CD14-positive monocyte (primary cell): ENCODE measurements at regions of chr20 and their contacts with region 1.

Region 1: DNA sequence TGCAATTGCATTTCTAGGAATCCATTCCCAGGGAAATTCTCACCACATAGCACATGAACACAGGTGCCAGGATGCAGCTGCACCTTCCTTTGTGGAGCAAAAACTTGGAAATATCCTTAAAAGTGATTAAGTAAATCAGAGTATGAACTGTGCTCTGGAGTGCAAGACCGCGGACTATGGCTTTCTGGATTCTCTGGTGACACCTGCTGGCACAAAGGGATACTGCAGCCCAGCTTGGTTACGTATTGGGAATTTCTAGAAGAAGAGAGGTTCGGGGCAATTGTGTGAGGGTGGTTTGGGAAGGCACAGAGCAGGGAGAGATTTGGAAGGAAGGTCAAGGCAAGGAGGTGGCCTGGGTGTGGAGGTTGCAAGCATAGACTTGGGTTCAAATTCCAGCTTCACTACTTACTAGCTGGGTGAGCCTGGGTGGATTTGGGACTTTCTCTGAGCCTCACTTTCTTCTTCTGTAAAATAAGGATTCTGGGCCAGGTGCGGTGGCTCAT is 15.9 kb upstream of the PEDS1 start:
- DNase-seq: peak; percentile 69 to 80 (median 78)
- H3K4me3 ChIP-seq: no peak overlapping the region
- H3K4me3 Mint-ChIP-seq: no peak overlapping the region
- H3K27ac ChIP-seq: no peak overlapping the region
- H3K27ac Mint-ChIP-seq: peak overlapping the region in 3 of 7 donors; percentile 1 to 46 (median 32)
- H3K4me1 ChIP-seq: peaks cover 29 to 30% of the 10 kb centered on the region in 2 donors
- H3K4me1 Mint-ChIP-seq: peaks cover 26% of the 10 kb centered on the region
- H3K27me3 ChIP-seq: peaks cover 0 to 10% of the 10 kb centered on the region in 2 donors
- H3K27me3 Mint-ChIP-seq: peaks cover 13 to 17% (median 15%) of the 10 kb centered on the region in 3 donors
- CTCF ChIP-seq: peak; percentile 94

Region 2: DNA sequence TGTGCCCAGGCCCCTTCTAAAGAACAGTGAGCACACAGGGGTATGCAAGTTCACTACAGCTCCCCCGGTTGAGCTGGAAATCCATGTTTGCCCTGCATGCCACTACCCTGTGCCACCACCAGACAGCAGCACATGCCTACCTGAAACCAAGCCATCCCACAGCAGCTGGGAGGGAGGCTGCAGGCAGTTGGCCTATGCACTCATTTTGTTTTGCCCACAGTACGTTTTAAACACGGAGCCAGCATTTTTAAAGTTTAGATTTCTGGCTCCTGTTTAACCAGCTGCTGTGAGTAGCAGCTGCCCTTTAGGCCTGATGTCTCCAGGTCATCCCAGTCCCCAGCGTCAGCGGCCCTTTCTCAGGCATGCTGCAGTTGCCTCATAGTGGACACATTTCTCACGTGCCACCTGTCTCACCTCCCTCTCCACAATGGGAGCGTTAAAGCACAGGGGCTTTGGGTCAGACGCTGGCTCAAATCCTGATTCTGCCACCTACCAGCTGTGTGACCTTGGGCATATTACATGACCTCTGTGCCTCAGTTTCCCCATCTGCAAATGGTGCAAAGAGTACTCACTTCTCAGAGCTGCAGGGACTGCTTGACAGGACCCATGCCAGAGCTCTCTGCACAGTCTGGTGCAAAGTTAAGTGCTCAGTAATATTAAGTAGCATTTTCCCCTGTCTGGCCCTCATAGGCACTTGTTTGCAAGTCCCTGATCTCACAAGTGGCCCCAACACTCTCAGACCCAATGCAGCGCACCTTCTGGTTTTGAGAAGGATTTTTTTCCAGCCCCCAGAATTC is 48.3 kb before region 1 on chr20:
- intact Hi-C with region 1: loop called (anchors 2 kb)
- DNase-seq: peak; percentile 62 to 74 (median 67)
- H3K4me3 ChIP-seq: no peak overlapping the region
- H3K4me3 Mint-ChIP-seq: no peak overlapping the region
- H3K27ac ChIP-seq: no peak overlapping the region
- H3K27ac Mint-ChIP-seq: peak overlapping the region in 2 of 7 donors; percentile 13 to 66
- H3K4me1 ChIP-seq: peaks cover 5 to 6% of the 10 kb centered on the region in 2 donors
- H3K4me1 Mint-ChIP-seq: peaks cover 10% of the 10 kb centered on the region
- H3K27me3 ChIP-seq: no peaks in the 10 kb centered on the region
- H3K27me3 Mint-ChIP-seq: peaks cover 0 to 4% (median 2%) of the 10 kb centered on the region in 3 donors
- CTCF ChIP-seq: peak; percentile 85

Region 3: GRCh38 chr20:50144362-50144761 is 25.0 kb before region 1 on chr20:
- intact Hi-C with region 1: loop called in 1 of 2 experiments (anchors 1 kb)
- DNase-seq: peak; percentile 94 to 98 (median 96)
- H3K4me3 ChIP-seq: no peak overlapping the region
- H3K4me3 Mint-ChIP-seq: no peak overlapping the region
- H3K27ac ChIP-seq: peak overlapping the region; percentile 89 to 99
- H3K27ac Mint-ChIP-seq: peak overlapping the region; percentile 93 to 98 (median 95)
- H3K4me1 ChIP-seq: peaks cover 41 to 57% of the 10 kb centered on the region in 2 donors
- H3K4me1 Mint-ChIP-seq: peaks cover 52% of the 10 kb centered on the region
- H3K27me3 ChIP-seq: no peaks in the 10 kb centered on the region
- H3K27me3 Mint-ChIP-seq: peaks cover 0 to 2% (median 0%) of the 10 kb centered on the region in 3 donors
- CTCF ChIP-seq: no peak

Region 4: DNA sequence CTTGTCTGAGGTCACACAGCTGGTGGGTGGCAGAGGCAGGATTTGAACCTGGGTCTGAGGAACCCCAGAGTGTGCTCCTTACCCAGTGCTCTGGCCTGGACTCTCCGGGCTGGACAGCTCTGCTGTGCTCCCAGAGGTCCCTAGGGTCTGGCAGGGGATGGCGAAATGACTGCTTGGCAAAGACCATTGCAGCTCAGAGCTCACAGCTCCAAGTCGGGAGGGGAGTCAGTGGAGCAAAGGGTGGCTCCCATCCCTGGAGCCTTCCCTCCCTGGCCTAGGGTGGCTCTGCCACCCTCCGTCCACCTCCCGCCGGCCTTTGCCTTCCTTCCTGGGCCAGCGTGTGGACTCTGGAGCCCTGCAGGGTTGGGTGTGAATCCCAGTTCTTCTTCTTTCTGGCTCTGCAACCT is 38.7 kb after region 1 on chr20:
- intact Hi-C with region 1: no loop called
- DNase-seq: no peak
- H3K4me3 ChIP-seq: no peak overlapping the region
- H3K4me3 Mint-ChIP-seq: no peak overlapping the region
- H3K27ac ChIP-seq: no peak overlapping the region
- H3K27ac Mint-ChIP-seq: no peak overlapping the region
- H3K4me1 ChIP-seq: peaks cover 12 to 21% of the 10 kb centered on the region in 2 donors
- H3K4me1 Mint-ChIP-seq: peaks cover 41% of the 10 kb centered on the region
- H3K27me3 ChIP-seq: no peaks in the 10 kb centered on the region
- H3K27me3 Mint-ChIP-seq: peaks cover 0 to 7% (median 6%) of the 10 kb centered on the region in 3 donors
- CTCF ChIP-seq: no peak